ENCODE measurements at regions of chr9 and their contacts with region 1.

Region 1: DNA sequence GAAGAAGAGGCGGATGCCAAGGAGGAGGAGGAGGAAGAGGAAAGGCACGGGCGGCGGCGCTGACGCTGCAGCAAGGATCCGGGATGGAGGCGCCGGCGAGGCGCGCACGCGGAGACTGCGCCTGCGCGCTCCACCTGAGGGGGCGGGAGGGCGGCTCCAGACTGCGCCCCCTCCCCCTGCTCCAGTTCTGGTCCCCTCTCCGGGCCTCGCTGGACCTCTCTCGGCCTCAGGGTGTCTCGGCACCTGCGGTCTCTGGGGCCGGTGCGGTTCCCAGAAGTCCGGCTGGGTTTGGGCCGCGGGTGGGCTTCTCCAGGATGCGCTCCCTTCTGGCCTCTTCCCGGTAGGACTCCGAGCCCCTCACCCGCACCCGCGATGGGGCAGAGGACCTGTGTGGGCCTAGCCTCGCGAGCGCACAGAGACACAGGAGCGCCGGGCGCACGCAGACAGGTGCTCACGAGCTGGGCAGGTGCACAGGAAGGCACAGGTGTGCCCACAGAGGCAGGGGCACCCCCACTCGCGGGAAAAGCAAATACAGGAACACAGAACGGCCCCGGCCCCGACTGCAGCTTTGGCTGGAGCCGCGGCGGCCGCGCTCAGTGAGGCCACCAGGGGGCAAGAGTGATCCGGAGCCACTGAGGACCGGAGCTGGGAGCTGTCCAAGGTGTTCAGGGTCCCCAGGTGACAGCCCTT is at the start of gene NPDC1:
- H3K4me3 Mint-ChIP-seq: peak within 1 kb of the TSS; percentile 65
- H3K27ac Mint-ChIP-seq: no peak within 1 kb of the TSS
- H3K4me1 Mint-ChIP-seq: peaks cover 21% of the 10 kb centered on the region
- H3K27me3 Mint-ChIP-seq: peaks cover 88% of the 10 kb centered on the region

Region 2: GRCh38 chr9:137064027-137064879 is 18.0 kb after region 1 on chr9:
- intact Hi-C with region 1: loop called (anchors 2 kb)
- H3K4me3 Mint-ChIP-seq: no peak overlapping the region
- H3K27ac Mint-ChIP-seq: no peak overlapping the region
- H3K4me1 Mint-ChIP-seq: peaks cover 25% of the 10 kb centered on the region
- H3K27me3 Mint-ChIP-seq: peaks cover 20% of the 10 kb centered on the region

Region 3: GRCh38 chr9:137217276-137218211 is 171.3 kb after region 1 on chr9:
- intact Hi-C with region 1: no loop called
- H3K4me3 Mint-ChIP-seq: peak overlapping the region; percentile 28
- H3K27ac Mint-ChIP-seq: peak overlapping the region; percentile 51
- H3K4me1 Mint-ChIP-seq: peaks cover 32% of the 10 kb centered on the region
- H3K27me3 Mint-ChIP-seq: peaks cover 14% of the 10 kb centered on the region